Activated T-helper 2 cell treated with anti-CD3 and anti-CD28 coated beads, Interferon-gamma antibody, Interleukin-2, Interleukin-4, amounts not matched to agents 10 μg/mL and 5 μg/mL and 100 μg/mL, durations not matched to agents 14 hours and 24 hours and 36 hours (primary cell): ENCODE measurements at regions of chr1 and their contacts with region 1.

Region 1: DNA sequence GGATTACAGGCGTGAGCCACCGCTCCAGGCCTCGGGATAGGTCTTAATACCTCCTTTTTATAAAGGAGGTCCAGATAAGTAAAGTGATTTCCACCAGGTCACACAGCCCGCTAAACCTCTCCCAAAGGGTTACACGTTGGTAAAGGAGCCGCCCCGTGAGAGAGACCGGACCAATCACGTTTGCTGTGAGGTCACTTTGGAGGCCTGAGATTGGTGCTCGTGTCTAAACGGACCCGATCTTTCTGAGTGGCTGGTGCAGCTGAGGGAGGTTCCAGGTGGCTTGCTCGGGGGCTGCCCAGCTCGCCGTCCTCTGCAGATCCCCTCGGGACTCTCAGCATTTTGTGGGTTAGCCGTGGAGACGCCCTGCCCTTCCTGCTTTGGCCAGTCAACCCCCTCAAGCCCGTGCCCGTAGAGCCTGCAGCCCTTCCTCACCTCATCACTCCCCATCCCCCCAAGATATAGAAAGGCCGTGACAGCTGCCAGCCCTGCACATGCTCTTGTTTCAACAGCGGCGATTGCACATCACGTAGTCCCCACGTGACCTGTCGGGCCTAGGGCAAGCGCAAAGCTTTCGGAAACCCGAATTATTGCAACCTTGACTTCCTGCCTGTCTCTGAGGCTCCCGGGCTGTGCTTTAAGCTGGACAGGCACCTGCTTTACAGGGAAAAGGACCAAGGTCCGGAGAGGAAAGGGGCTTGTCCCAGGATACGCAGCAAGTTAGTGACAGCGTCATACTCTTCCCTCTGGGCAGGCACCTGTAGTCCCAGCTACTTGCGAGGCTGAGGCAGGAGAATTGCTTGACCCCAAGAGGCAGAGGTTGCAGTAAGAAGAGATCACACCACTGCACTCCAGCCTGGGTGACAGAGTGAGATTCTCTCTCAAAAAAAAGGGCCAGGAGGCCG is 5.0 kb upstream of the COA7 start:
- DNase-seq: peak; percentile 81
- H3K4me3 Mint-ChIP-seq: peak overlapping the region; percentile 83
- H3K27ac Mint-ChIP-seq: peak overlapping the region; percentile 80
- H3K4me1 Mint-ChIP-seq: peaks cover 19% of the 10 kb centered on the region
- H3K27me3 Mint-ChIP-seq: peaks cover under 1% of the 10 kb centered on the region

Region 2: GRCh38 chr1:52726265-52727113 is 23.4 kb after region 1 on chr1 and contains the start of gene ZYG11B:
- intact Hi-C with region 1: loop called (anchors 2 kb)
- DNase-seq: peak; percentile 87
- H3K4me3 Mint-ChIP-seq: peak within 1 kb of the TSS; percentile 93
- H3K27ac Mint-ChIP-seq: peak within 1 kb of the TSS; percentile 70
- H3K4me1 Mint-ChIP-seq: peaks cover 25% of the 10 kb centered on the region
- H3K27me3 Mint-ChIP-seq: no peaks in the 10 kb centered on the region
- total RNA-seq, gene ZYG11B: 12.7 and 13.2 TPM in 2 replicates

Region 3: DNA sequence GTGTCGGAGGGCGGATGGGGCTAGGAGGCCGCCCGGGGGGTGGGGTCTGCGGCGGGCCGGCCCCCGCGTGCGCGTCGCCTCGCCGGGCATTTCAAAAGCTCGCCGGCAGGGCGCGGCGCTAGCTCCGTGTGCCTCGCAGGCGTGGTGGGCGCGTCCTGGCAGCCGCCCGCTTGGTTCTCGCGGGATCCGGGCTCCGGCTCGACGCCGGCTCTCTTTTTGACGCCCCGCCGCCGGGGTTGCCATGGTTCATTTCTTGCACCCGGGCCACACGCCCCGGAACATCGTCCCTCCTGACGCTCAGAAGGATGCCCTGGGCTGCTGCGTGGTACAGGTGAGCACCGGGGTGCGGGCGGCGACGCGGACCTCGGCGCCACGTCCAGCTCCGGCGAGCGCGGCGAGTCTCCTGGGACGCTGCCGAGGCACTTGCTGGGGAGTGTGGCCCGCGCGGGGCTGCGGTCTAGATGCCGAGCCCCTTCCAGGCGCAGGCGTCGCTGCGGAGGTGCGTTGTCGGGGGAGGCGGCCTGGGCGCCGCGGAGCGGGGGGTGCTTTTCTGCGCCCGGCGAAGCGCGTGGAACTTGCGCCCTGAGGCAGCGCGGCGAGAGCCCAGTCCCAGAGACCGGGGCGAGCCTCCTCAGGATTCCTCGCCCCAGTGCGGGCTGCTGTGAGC is 139.6 kb after region 1 on chr1 and contains the start of gene ZYG11A:
- intact Hi-C with region 1: loop called (anchors 5 kb)
- DNase-seq: peak; percentile 78
- H3K4me3 Mint-ChIP-seq: peak within 1 kb of the TSS; percentile 65
- H3K27ac Mint-ChIP-seq: no peak within 1 kb of the TSS
- H3K4me1 Mint-ChIP-seq: peaks cover 2% of the 10 kb centered on the region
- H3K27me3 Mint-ChIP-seq: peaks cover 18% of the 10 kb centered on the region
- total RNA-seq, gene ZYG11A: 0.30 and 0.37 TPM in 2 replicates

Region 4: GRCh38 chr1:52927212-52928014 is 224.3 kb after region 1 on chr1 and contains the start of gene SCP2:
- intact Hi-C with region 1: loop called (anchors 10 kb)
- DNase-seq: peak; percentile 73
- H3K4me3 Mint-ChIP-seq: peak within 1 kb of the TSS; percentile 91
- H3K27ac Mint-ChIP-seq: peak within 1 kb of the TSS; percentile 70
- H3K4me1 Mint-ChIP-seq: peaks cover 16% of the 10 kb centered on the region
- H3K27me3 Mint-ChIP-seq: no peaks in the 10 kb centered on the region
- total RNA-seq, gene SCP2: 58.8 and 66.1 TPM in 2 replicates

Region 5: GRCh38 chr1:53196485-53197270 is 493.5 kb after region 1 on chr1 and contains the start of gene CPT2:
- intact Hi-C with region 1: loop called (anchors 10 kb)
- DNase-seq: peak; percentile 90
- H3K4me3 Mint-ChIP-seq: peak within 1 kb of the TSS; percentile 89
- H3K27ac Mint-ChIP-seq: peak within 1 kb of the TSS; percentile 90
- H3K4me1 Mint-ChIP-seq: peaks cover 22% of the 10 kb centered on the region
- H3K27me3 Mint-ChIP-seq: no peaks in the 10 kb centered on the region
- total RNA-seq, gene CPT2: 23.3 and 25.3 TPM in 2 replicates